ENCODE measurements at regions of chr1 and their contacts with region 1.

Region 1: GRCh38 chr1:235093696-235094592 is 34.7 kb downstream of the TOMM20 start:
- DNase-seq: peak; percentile 51
- ATAC-seq: peak; percentile 75
- H3K4me3 ChIP-seq: peak overlapping the region in 1 of 3 experiments; percentile 41; a peak in 1 of 6 replicates
- H3K27ac ChIP-seq: no peak overlapping the region
- H3K4me1 ChIP-seq: peaks cover 60% of the 10 kb centered on the region
- H3K27me3 ChIP-seq: no peaks in the 10 kb centered on the region
- CTCF ChIP-seq: peak; percentile 88
- EP300 ChIP-seq: no peak
- POLR2A ChIP-seq: no peak
- RAD21 ChIP-seq: peak; percentile 64

Region 2: GRCh38 chr1:235050911-235051360 is 43.0 kb before region 1 on chr1:
- CTCF ChIA-PET with region 1: no interaction called
- POLR2A ChIA-PET with region 1: no interaction called
- in situ Hi-C with region 1: no loop called
- intact Hi-C with region 1: no loop called
- DNase-seq: no peak
- ATAC-seq: peak; percentile 14; the same call in 2 of the 3 replicates
- H3K4me3 ChIP-seq: no peak overlapping the region
- H3K27ac ChIP-seq: no peak overlapping the region
- H3K4me1 ChIP-seq: peaks cover 27% of the 10 kb centered on the region
- H3K27me3 ChIP-seq: no peaks in the 10 kb centered on the region
- CTCF ChIP-seq: no peak
- EP300 ChIP-seq: no peak
- POLR2A ChIP-seq: 0 out of 4 replicates have a peak, but pooled peaks of 1 of the 2 experiments have one; percentile 17
- RAD21 ChIP-seq: no peak

Region 3: DNA sequence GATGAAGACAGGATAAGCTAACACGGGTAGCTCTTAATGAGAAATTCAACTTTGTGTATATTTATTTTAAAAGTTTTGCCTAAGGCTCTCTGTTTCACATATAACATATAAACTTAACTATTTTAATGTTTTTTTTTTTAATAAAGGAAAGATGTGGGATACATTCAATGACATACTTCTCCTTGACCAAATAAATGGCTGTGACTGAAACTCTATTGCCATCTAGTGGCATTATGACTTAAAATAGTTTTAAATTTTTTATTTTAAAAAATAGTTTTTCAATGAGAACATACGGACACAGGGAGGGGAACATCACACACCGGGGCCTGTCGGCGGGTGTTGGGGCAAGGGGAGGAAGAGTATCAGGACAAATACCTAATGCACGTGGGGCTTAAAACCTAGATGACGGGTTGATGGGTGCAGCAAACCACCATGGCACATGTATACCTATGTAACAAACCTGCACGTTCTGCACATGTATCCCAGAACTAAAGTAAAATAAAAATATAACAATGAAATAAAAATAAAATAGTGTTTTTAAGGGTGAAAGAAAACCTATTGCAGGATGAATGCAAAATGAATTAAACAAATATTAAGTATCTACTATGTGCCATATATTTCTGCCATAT is 689.3 kb after region 1 on chr1:
- CTCF ChIA-PET with region 1: no interaction called
- POLR2A ChIA-PET with region 1: no interaction called
- in situ Hi-C with region 1: no loop called
- intact Hi-C with region 1: loop called (anchors 10 kb)
- DNase-seq: peak; percentile 43
- ATAC-seq: no peak
- H3K4me3 ChIP-seq: no peak overlapping the region
- H3K27ac ChIP-seq: no peak overlapping the region
- H3K4me1 ChIP-seq: no peaks in the 10 kb centered on the region
- H3K27me3 ChIP-seq: no peaks in the 10 kb centered on the region
- CTCF ChIP-seq: peak; percentile 41
- EP300 ChIP-seq: no peak
- POLR2A ChIP-seq: no peak
- RAD21 ChIP-seq: no peak

Measured in HepG2 (cell line).